Common myeloid progenitor, CD34-positive (primary cell): ENCODE measurements at regions of chr2 and their contacts with region 1.

Region 1: DNA sequence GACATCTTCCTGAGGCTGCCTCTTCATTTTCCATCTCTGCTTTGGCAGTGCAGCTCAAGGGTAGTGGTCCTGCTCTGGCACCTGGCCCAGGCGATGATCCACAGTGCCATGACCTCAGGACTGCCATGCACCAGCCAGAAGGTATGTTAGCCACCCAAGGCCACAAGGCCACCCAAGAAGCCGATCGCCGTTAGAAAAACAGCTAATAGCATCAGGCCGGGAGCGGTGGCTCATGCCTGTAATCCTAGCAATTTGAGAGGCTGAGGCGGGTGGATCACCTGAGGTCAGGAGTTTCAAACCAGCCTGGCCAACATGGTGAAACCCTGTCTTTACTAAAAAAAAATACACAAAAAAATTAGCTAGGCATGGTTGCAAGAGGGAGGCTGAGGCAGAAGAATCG is 28.4 kb upstream of the UGGT1 start:
- DNase-seq: no peak
- H3K4me3 ChIP-seq: no peak overlapping the region
- H3K27ac ChIP-seq: no peak overlapping the region
- H3K4me1 ChIP-seq: no peaks in the 10 kb centered on the region
- H3K27me3 ChIP-seq: no peaks in the 10 kb centered on the region

Region 2: GRCh38 chr2:127943186-127943585 is 119.4 kb before region 1 on chr2:
- CTCF ChIA-PET with region 1: no interaction called
- POLR2A ChIA-PET with region 1: no interaction called
- DNase-seq: no peak
- H3K4me3 ChIP-seq: no peak overlapping the region
- H3K27ac ChIP-seq: no peak overlapping the region
- H3K4me1 ChIP-seq: no peaks in the 10 kb centered on the region
- H3K27me3 ChIP-seq: no peaks in the 10 kb centered on the region

Region 3: DNA sequence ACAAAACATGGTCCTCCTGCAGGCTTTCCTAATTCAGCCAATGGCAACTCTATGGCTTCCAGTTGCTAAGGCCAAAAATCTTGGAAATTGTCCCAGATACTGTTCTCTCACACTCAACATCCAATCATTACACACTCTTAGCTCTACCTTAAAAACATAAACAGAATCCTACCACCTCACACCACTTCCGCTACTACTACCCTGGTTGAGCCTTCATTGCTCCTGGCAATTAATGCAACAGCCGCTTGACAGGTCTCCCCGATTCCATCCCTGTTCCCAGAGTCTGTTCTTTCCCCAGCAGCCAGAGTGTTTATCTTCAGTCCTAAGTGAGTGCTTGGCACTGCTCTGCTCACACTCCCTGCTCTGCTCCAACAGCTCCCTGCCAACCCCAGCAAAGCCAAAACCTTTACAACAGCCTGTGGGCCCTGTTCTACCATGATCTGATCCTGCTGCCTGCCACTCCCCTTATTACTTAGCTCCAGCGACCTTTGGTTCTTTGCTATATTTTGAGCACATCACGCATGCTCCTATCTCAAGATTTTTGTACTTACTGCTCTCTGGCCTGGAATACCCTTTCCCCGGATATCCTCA is 109.3 kb before region 1 on chr2:
- CTCF ChIA-PET with region 1: no interaction called
- POLR2A ChIA-PET with region 1: no interaction called
- DNase-seq: no peak
- H3K4me3 ChIP-seq: no peak overlapping the region
- H3K27ac ChIP-seq: no peak overlapping the region
- H3K4me1 ChIP-seq: no peaks in the 10 kb centered on the region
- H3K27me3 ChIP-seq: no peaks in the 10 kb centered on the region

Region 4: DNA sequence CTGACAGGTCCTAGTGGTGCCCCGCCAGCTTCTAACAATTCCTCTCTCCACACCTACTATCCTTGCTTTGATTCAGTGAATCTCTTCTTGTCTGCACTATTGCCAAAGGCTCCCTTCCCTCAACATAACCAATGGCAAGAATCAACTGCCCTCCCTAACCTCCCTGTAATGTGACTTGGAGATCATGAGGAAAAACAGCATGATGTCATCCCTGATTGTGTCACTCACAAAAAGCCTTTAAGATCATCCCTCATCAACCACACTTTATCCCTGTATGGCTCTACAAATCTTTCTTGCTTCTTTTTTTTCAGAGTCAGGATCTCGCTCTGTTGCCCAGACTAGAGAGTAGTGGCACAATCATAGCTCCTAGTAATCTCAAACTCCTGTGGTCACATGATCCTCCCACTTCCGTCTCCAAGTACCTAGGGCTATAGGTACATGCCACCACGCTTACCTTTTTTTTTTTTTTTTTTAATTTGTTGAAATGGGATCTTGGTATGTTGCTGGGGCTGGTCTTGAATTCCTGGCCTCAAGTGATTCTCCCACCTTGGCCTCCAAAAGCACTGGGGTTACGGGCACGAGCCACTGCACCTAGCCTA is 54.4 kb before region 1 on chr2:
- CTCF ChIA-PET with region 1: no interaction called
- POLR2A ChIA-PET with region 1: no interaction called
- DNase-seq: no peak
- H3K4me3 ChIP-seq: no peak overlapping the region
- H3K27ac ChIP-seq: no peak overlapping the region
- H3K4me1 ChIP-seq: no peaks in the 10 kb centered on the region
- H3K27me3 ChIP-seq: no peaks in the 10 kb centered on the region

Region 5: DNA sequence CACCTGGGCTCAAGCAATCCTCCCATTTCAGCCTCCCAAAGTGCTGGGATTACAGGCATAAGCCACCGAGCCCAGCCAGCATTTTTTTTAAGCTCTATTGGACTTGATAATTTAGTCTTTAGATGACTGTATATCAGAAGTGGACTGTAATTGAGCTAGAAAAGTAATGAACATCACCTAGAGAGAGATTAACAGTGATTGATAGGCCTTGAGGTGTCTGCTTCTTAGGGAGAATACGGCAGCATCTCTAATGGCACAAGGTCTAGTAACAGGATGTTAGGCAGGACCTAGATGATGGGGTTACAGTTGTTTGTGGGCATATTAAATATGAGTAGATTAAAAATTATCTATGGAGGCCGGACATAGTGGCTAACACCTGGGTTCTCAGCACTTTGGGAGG is 10.7 kb after region 1 on chr2:
- CTCF ChIA-PET with region 1: interaction called, 14 read pairs
- POLR2A ChIA-PET with region 1: no interaction called
- DNase-seq: no peak
- H3K4me3 ChIP-seq: no peak overlapping the region
- H3K27ac ChIP-seq: no peak overlapping the region
- H3K4me1 ChIP-seq: no peaks in the 10 kb centered on the region
- H3K27me3 ChIP-seq: no peaks in the 10 kb centered on the region

Region 6: DNA sequence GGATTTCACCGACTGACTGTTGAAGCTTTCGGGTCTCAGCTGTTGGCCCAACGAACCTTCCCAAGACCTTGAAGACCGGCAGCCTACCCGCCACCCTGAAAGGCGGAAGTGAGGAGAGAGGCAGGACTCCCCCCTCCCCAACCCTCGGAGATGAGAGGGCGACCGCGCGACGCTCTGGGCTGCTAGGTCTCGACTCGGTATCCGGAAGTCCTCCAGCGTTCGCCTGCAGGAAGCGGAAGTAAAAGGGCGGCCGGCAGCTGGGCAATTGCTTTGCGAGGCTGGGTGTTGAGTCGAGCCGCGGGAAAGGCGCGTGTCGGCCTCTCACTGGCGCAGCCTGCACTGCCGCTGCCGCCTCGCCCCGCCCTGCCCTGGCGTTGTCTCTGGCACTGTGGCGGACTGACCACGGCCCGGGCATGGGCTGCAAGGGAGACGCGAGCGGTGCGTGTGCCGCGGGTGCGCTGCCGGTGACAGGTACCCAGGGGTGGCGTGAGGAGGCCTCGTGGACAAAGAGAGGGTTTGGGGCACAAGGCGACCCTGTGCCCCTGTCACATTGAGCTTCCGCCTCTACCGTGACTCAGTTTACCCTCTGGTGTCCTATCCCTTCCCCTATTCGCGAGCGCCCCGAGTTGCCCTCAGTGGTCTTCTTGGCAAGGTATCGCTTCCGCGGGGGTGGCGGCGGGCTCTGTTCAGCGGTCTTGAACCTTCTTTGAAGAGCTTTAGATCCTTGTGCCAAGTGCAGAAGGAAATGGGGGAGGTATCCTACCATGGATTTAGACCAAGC is 28.6 kb after region 1 on chr2 and contains the start of gene UGGT1:
- CTCF ChIA-PET with region 1: interaction called, 17 read pairs
- POLR2A ChIA-PET with region 1: no interaction called
- DNase-seq: peak; percentile 98 to 99 (median 99)
- H3K4me3 ChIP-seq: peak within 1 kb of the TSS; percentile 84 to 100 (median 98)
- H3K27ac ChIP-seq: peak within 1 kb of the TSS; percentile 84 to 94
- H3K4me1 ChIP-seq: peaks cover 5 to 27% (median 10%) of the 10 kb centered on the region in 4 experiments
- H3K27me3 ChIP-seq: no peaks in the 10 kb centered on the region